RWPE1 (cell line): ENCODE measurements at regions of chr11 and their contacts with region 1.

Region 1: GRCh38 chr11:73661035-73661628 is 14.8 kb downstream of the PLEKHB1 start:
- DNase-seq: peak; percentile 95
- H3K27ac ChIP-seq: no peak overlapping the region
- CTCF ChIP-seq: peak; percentile 91

Region 2: GRCh38 chr11:73625696-73626318 is 35.3 kb before region 1 on chr11:
- CTCF ChIA-PET with region 1: interaction called, 35 read pairs
- POLR2A ChIA-PET with region 1: no interaction called
- DNase-seq: peak; percentile 88
- H3K27ac ChIP-seq: no peak overlapping the region
- CTCF ChIP-seq: peak; percentile 89

Region 3: DNA sequence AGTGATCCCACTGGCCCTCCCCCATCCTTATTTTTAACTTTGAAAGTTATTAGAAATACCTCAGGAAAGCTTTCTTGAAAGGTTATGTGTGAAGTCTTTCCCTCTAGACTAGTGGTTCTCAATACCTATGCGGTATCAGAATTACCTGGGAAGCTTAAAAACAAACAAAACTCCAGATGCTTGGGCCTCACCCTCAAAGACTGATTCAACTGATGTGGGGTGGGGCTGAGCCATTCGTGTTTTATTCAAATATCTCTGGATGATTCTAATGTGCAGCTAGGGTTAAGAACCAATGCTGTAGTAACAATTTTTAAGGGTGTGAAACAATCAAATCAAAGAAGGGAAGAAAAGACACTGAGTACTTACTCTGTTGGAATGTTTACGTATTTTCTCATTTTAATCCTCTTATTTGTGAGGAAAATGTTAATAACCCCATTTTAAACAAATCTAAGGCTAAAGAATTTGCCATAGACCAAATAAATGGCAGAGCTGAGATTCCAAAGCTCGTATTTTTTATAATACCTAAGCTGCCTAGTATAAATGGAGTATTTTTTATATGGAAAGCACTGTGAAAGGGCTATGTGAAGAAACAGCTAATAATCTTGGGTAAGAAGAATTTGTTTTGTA is 32.9 kb after region 1 on chr11:
- CTCF ChIA-PET with region 1: no interaction called
- POLR2A ChIA-PET with region 1: no interaction called
- DNase-seq: no peak
- H3K27ac ChIP-seq: no peak overlapping the region
- CTCF ChIP-seq: no peak